Activated B cell treated with CpG ODN at 0.5 μM for 24 hours (primary cell): ENCODE measurements at regions of chr19 and their contacts with region 1.

Region 1: GRCh38 chr19:14091081-14091812 is 696 bp upstream of the SAMD1 start:
- DNase-seq: peak; percentile 81
- ATAC-seq: peak; percentile 75
- H3K4me3 Mint-ChIP-seq: peak overlapping the region; percentile 99
- H3K27ac Mint-ChIP-seq: peak overlapping the region; percentile 99
- H3K4me1 Mint-ChIP-seq: peaks cover 18% of the 10 kb centered on the region
- H3K27me3 Mint-ChIP-seq: no peaks in the 10 kb centered on the region
- CTCF ChIP-seq: no peak

Region 2: GRCh38 chr19:14117668-14118164 is 26.5 kb after region 1 on chr19 and contains the start of gene PRKACA:
- CTCF ChIA-PET with region 1: interaction called, 6 read pairs
- POLR2A ChIA-PET with region 1: interaction called, 5 read pairs
- intact Hi-C with region 1: loop called (anchors 1 kb)
- DNase-seq: peak; percentile 95
- ATAC-seq: peak; percentile 95
- H3K4me3 Mint-ChIP-seq: peak within 1 kb of the TSS; percentile 89
- H3K27ac Mint-ChIP-seq: peak within 1 kb of the TSS; percentile 68
- H3K4me1 Mint-ChIP-seq: peaks cover 42% of the 10 kb centered on the region
- H3K27me3 Mint-ChIP-seq: no peaks in the 10 kb centered on the region
- CTCF ChIP-seq: no peak
- total RNA-seq, gene PRKACA: 41.6 and 43.7 TPM in 2 replicates